AG04449 (cell line): ENCODE measurements at regions of chr4 and their contacts with region 1.

Region 1: DNA sequence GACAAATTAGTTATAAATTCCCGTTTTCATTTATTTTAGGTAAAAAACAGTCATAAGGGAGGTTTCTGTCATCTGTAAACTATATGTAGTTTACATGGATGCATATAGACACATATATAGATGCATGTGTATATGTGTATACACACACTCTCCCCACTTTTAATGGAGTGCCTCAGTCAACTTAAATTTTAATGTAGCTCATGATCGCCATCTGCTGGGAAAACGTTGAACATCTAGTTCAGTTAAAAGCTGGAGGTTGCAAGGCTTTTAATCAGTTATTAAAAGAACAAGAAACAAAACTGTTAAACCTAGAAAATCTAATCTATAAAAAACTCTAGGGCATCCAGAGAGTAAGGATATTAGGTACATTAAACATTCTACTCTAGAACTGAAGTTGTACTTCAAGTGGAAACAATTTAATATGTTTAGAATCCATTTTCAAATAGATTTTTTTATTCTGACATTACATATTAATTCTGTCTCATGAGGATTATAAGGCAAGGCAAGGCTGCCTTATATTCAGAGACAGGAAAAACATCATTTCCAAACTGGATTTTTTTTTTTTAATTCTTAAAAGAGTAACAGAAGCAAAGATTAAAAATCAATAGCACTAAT is 122.6 kb downstream of the SHISA3 start:
- DNase-seq: no peak
- H3K4me3 ChIP-seq: no peak overlapping the region
- CTCF ChIP-seq: peak; percentile 32

Region 2: DNA sequence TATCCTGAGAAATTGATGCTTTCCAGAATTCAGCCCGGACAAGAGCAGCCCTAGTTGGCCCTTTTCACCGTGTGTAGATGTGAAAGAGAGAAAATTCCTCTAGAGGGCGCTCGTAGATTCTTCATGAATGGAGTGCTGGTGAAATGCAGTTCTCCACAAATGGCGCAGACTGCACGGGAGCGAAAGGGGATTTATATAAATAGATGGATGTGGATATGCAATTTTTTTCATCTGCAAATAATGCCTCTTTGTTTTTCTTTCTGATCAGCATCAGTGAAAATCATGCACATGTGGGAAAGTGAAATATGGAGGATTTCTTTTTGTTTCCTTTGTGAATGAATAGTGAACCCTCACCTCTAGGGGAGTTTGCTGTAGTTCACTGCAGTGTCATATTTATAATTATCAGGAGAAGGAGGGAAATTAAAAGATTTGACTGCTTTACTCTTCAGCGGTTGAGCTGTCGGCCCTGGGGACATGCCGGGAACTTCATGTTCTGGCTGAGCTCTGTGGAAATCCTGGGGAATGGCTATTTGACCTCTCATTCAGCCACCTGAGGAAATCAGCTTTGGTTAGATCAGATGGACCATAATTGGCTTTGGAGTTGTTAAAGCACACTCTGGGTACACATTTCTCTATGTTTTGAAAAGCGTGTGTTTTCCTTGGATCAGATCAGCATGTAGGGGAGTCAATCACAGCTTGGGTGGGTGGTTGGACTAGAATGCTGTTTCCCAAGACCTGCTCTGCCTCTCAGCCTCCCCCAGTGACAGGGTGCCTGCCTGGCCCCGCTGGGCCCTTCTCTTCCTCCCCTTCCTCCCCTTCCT is 237.6 kb before region 1 on chr4:
- CTCF ChIA-PET with region 1: interaction called, 70 read pairs
- POLR2A ChIA-PET with region 1: no interaction called
- DNase-seq: peak; percentile 3
- H3K4me3 ChIP-seq: no peak overlapping the region
- CTCF ChIP-seq: peak; percentile 37

Region 3: GRCh38 chr4:42371306-42372252 is 148.3 kb before region 1 on chr4:
- CTCF ChIA-PET with region 1: interaction called, 82 read pairs
- POLR2A ChIA-PET with region 1: no interaction called
- DNase-seq: peak; percentile 7
- H3K4me3 ChIP-seq: no peak overlapping the region
- CTCF ChIP-seq: peak; percentile 17